GM12878 (cell line): ENCODE measurements at regions of chr13 and their contacts with region 1.

Region 1: DNA sequence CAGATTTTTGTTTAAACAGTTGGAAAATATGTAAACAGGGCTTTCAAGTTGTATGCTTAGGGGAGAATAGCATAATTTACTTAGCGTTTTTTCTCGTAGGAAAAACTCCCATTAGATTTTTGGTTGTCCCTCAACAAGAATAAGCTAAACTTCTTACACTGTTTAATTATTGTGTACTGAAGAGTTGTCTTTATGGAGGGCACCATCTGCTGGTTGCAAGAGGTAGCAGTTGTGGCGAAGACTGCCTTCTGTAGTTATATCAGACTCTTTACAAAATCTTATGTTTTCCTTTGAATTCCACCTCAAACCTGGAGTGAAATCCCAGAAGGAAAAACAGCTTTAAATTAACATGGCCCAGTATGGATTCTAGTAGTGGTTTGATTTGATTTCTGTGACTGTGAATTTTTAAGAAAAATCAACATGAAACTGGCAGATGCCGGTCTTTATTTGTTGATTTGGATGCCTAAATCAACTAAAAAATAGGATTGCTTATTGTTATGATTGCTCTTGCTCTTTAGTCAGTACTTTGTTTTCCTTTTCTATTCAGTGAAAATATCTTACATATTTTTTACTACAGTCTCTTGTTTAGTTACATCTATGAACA is 53.4 kb downstream of the PDS5B start:
- DNase-seq: peak; percentile 15
- ATAC-seq: peak; percentile 91
- H3K4me3 ChIP-seq: no peak overlapping the region
- H3K27ac ChIP-seq: no peak overlapping the region
- H3K4me1 ChIP-seq: peaks cover 9% of the 10 kb centered on the region
- H3K27me3 ChIP-seq: no peaks in the 10 kb centered on the region
- CTCF ChIP-seq: peak; percentile 74 to 83 (median 75)
- EP300 ChIP-seq: no peak
- POLR2A ChIP-seq: no peak
- RAD21 ChIP-seq: peak; percentile 73

Region 2: DNA sequence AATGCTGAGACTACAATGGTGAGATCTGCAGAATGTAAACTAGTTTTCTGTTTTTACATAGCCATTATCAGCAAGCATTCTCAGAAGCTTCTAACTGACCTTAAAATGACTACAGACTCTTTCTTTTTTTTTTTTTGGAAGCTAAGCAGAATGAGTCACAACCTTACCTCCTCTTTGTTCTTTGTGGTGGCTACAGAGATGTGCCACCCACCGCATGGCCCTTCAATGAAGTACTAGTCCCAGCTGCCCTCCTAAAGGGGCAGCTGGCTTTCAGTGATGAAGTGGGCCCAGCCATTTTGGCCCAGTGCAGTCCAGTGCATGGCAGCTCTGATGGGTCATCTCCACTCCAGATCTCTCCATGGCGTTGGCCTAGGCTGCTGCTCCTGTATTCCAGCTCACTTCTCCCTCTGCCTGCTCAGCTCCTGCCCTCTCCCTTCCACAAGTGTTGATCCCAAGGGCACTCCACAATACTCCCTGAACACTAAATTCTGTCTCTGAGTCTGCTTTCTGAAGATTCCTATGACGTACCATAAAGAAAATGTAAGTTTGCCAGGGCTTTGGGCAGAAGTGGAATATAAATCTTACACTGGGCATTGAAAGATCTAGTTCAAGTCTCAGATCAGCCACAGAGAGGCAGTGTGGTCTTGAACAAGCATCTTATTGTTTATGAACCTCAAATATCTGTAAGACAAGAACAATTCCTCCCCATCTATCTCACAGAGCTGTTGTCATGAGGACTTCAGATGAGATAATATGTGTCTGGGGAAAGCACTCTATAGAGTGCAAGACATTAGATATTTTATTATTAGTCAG is 814.7 kb before region 1 on chr13:
- CTCF ChIA-PET with region 1: no interaction called
- POLR2A ChIA-PET with region 1: no interaction called
- RAD21 ChIA-PET with region 1: no interaction called
- SMC1A ChIA-PET with region 1: no interaction called
- in situ Hi-C with region 1: no loop called
- intact Hi-C with region 1: no loop called
- DNase-seq: peak; percentile 13
- ATAC-seq: peak; percentile 71
- H3K4me3 ChIP-seq: no peak overlapping the region
- H3K27ac ChIP-seq: no peak overlapping the region
- H3K4me1 ChIP-seq: no peaks in the 10 kb centered on the region
- H3K27me3 ChIP-seq: no peaks in the 10 kb centered on the region
- CTCF ChIP-seq: peak; percentile 16 to 58 (median 17); a peak in 4 of 6 replicates
- EP300 ChIP-seq: no peak
- POLR2A ChIP-seq: no peak
- RAD21 ChIP-seq: peak; percentile 41

Region 3: DNA sequence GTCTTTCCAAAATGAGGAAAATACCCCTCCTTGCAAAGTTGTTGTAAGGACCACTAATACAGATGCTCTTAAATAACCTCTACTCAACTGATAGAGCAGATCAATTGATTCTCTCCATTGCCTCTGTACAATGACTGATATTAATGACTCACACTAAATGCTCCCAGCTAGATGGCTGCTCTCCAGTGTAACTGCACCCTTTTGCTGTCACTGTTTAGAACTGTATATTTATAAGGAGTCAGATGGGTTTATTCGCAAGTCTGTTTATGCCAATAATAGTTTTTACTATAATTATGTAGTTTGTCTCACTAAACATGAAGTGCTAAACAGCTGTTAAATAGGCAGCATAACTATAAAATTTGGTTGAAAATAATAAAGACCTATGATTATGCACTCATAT is 190.6 kb before region 1 on chr13:
- CTCF ChIA-PET with region 1: no interaction called
- POLR2A ChIA-PET with region 1: no interaction called
- RAD21 ChIA-PET with region 1: no interaction called
- SMC1A ChIA-PET with region 1: no interaction called
- in situ Hi-C with region 1: no loop called
- intact Hi-C with region 1: no loop called
- DNase-seq: no peak
- ATAC-seq: no peak
- H3K4me3 ChIP-seq: no peak overlapping the region
- H3K27ac ChIP-seq: no peak overlapping the region
- H3K4me1 ChIP-seq: peaks cover 4% of the 10 kb centered on the region; the same call in 1 of the 2 replicates
- H3K27me3 ChIP-seq: no peaks in the 10 kb centered on the region
- CTCF ChIP-seq: no peak
- EP300 ChIP-seq: no peak
- POLR2A ChIP-seq: no peak
- RAD21 ChIP-seq: no peak

Region 4: GRCh38 chr13:32609428-32609827 is 30.2 kb before region 1 on chr13:
- CTCF ChIA-PET with region 1: interaction called, 12 read pairs
- POLR2A ChIA-PET with region 1: no interaction called
- RAD21 ChIA-PET with region 1: no interaction called
- SMC1A ChIA-PET with region 1: no interaction called
- in situ Hi-C with region 1: no loop called
- intact Hi-C with region 1: no loop called
- DNase-seq: no peak
- ATAC-seq: no peak
- H3K4me3 ChIP-seq: no peak overlapping the region
- H3K27ac ChIP-seq: no peak overlapping the region
- H3K4me1 ChIP-seq: no peaks in the 10 kb centered on the region
- H3K27me3 ChIP-seq: no peaks in the 10 kb centered on the region
- CTCF ChIP-seq: no peak
- EP300 ChIP-seq: no peak
- POLR2A ChIP-seq: no peak
- RAD21 ChIP-seq: no peak

Region 5: GRCh38 chr13:32659736-32660626 is 20.4 kb after region 1 on chr13:
- CTCF ChIA-PET with region 1: interaction called, 10 read pairs
- POLR2A ChIA-PET with region 1: interaction called, 3 read pairs
- RAD21 ChIA-PET with region 1: no interaction called
- SMC1A ChIA-PET with region 1: interaction called, 10 read pairs
- in situ Hi-C with region 1: no loop called
- intact Hi-C with region 1: no loop called
- DNase-seq: no peak
- ATAC-seq: no peak
- H3K4me3 ChIP-seq: no peak overlapping the region
- H3K27ac ChIP-seq: no peak overlapping the region
- H3K4me1 ChIP-seq: no peaks in the 10 kb centered on the region
- H3K27me3 ChIP-seq: no peaks in the 10 kb centered on the region
- CTCF ChIP-seq: no peak
- EP300 ChIP-seq: no peak
- POLR2A ChIP-seq: no peak
- RAD21 ChIP-seq: no peak

Region 6: DNA sequence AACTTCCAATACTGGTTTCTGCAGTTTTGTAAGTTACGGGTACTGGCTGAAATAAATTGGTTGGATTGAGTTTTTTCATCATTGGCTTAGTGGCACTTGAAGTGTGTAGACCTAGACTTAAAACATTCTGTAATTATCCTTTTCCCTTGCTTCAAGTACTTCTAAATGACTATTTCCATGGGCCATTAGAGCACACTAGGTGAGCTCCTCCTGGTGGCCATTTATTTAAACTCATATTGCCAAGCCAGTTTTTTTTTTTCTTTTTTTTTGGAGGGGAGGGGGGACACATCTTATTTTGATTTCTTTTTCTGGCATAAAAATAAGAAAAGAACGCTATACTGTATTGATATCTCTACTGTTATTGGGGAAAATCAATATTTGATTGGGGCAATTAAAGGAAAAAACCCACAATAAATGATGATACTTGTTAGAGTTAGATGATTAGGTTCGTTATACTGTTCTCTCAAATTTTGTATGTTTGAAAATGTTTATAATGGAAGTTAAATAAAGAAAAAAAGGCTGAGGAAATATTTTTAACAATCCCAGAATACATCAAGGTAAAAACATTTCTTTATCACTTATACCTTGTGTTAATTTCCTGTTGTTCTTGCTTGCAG is 29.5 kb after region 1 on chr13:
- CTCF ChIA-PET with region 1: interaction called, 31 read pairs
- POLR2A ChIA-PET with region 1: interaction called, 3 read pairs
- RAD21 ChIA-PET with region 1: interaction called, 6 read pairs
- SMC1A ChIA-PET with region 1: interaction called, 8 read pairs
- in situ Hi-C with region 1: no loop called
- intact Hi-C with region 1: no loop called
- DNase-seq: no peak
- ATAC-seq: peak; percentile 78
- H3K4me3 ChIP-seq: no peak overlapping the region
- H3K27ac ChIP-seq: no peak overlapping the region
- H3K4me1 ChIP-seq: no peaks in the 10 kb centered on the region
- H3K27me3 ChIP-seq: no peaks in the 10 kb centered on the region
- CTCF ChIP-seq: peak; percentile 57 to 65 (median 58); a peak in 5 of 6 replicates
- EP300 ChIP-seq: no peak
- POLR2A ChIP-seq: no peak
- RAD21 ChIP-seq: peak; percentile 68